ENCODE measurements at regions of chr1 and their contacts with region 1.

Region 1: DNA sequence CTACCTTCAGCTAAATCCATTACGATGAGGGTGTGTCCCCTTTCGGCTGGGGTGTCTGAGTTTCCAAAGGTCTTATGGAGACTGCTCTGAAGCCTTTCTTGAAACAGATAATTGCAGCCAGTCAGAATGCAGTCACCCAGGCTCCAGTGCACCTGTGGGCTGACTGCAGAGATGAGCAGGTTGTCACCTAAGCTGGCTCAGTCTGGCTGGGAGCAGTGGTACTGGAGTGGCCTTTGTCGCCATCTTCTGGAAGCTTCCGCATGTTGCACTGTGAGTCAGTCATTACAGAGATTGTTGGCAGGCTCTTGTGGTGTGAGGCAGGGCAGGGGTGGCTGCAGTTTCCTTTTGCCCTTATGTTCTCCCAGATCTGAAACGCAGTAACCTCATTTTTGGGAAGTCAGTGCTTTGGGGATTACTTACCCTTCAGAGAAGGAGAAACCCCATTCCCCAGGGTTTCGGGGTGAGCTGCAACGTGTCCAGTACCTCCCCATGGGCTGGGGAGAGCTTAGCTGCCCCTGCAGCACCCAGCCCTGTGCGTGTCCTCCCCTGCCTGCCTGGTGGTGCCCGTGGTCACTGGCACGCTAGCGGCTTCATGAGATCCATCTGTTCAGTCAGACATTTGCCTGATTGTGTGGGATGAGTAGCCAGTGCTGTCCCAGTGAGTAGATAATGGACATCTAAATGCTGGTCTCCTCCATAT is 48.0 kb downstream of the SMYD2 start:
- DNase-seq: peak; percentile 78
- ATAC-seq: peak; percentile 87
- H3K4me3 ChIP-seq: no peak overlapping the region
- H3K4me3 Mint-ChIP-seq: no peak overlapping the region
- H3K27ac ChIP-seq: no peak overlapping the region
- H3K27ac Mint-ChIP-seq: peak overlapping the region; percentile 10
- H3K4me1 ChIP-seq: no peaks in the 10 kb centered on the region
- H3K4me1 Mint-ChIP-seq: peaks cover 16% of the 10 kb centered on the region
- H3K27me3 ChIP-seq: no peaks in the 10 kb centered on the region
- H3K27me3 Mint-ChIP-seq: no peaks in the 10 kb centered on the region
- CTCF ChIP-seq: peak; percentile 88

Region 2: DNA sequence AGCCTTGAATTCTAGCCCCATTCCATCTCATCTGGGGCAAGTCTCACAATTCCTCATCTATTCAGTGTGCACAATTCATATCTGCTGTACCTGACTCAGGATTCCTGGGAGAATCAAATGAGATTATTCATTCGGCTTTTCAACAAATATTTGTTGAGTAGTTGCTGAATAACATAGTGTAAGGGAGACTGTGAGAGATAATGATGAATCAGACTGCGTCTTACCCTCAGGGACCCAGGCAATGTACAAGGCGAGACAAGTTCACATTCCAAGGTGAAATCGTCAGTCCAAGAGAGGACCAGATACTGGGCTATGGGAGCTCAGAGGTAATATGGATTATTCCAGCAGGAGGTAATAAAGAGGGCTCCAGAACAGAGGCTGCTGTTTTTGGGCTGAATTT is 115.8 kb before region 1 on chr1:
- CTCF ChIA-PET with region 1: interaction called, 49 read pairs
- POLR2A ChIA-PET with region 1: no interaction called
- intact Hi-C with region 1: loop called (anchors 1 kb)
- DNase-seq: no peak
- ATAC-seq: no peak
- H3K4me3 ChIP-seq: no peak overlapping the region
- H3K4me3 Mint-ChIP-seq: no peak overlapping the region
- H3K27ac ChIP-seq: no peak overlapping the region
- H3K27ac Mint-ChIP-seq: no peak overlapping the region
- H3K4me1 ChIP-seq: peaks cover 3% of the 10 kb centered on the region in 2 donors
- H3K4me1 Mint-ChIP-seq: peaks cover 2% of the 10 kb centered on the region
- H3K27me3 ChIP-seq: no peaks in the 10 kb centered on the region
- H3K27me3 Mint-ChIP-seq: peaks cover 18% of the 10 kb centered on the region
- CTCF ChIP-seq: no peak

Region 3: GRCh38 chr1:214281021-214281719 is 47.8 kb before region 1 on chr1 and contains the start of gene SMYD2:
- CTCF ChIA-PET with region 1: interaction called, 12 read pairs
- POLR2A ChIA-PET with region 1: no interaction called
- intact Hi-C with region 1: loop called (anchors 5 kb)
- DNase-seq: peak; percentile 79
- ATAC-seq: peak; percentile 77
- H3K4me3 ChIP-seq: peak within 1 kb of the TSS; percentile 56 to 86 (median 69)
- H3K4me3 Mint-ChIP-seq: peak within 1 kb of the TSS; percentile 89
- H3K27ac ChIP-seq: peak within 1 kb of the TSS; percentile 58 to 74
- H3K27ac Mint-ChIP-seq: peak within 1 kb of the TSS; percentile 78
- H3K4me1 ChIP-seq: peaks cover 17 to 28% of the 10 kb centered on the region in 2 donors
- H3K4me1 Mint-ChIP-seq: peaks cover 29% of the 10 kb centered on the region
- H3K27me3 ChIP-seq: no peaks in the 10 kb centered on the region
- H3K27me3 Mint-ChIP-seq: no peaks in the 10 kb centered on the region
- CTCF ChIP-seq: no peak
- total RNA-seq, gene SMYD2: 29.1 and 29.5 TPM in 2 replicates

Region 4: DNA sequence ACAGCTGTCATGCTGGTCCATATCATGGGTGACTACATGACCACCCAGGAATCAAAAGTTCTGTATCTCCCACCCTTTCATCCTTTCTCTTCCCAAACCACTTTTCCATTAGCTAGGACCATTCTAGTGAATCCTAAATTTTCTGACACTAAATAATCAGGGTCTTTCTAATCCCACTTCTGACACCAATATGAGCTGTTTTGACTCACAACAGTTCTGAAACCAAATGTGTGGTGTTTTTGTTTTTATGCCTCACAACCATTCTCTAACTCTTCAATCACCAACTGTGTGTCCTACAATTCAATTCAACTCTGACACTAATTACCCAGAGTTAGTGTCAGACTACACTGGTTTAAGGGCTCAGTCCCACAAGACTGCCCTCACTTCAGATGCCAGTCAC is 16.0 kb after region 1 on chr1:
- CTCF ChIA-PET with region 1: interaction called, 35 read pairs
- POLR2A ChIA-PET with region 1: interaction called, 3 read pairs
- intact Hi-C with region 1: no loop called
- DNase-seq: no peak
- ATAC-seq: no peak
- H3K4me3 ChIP-seq: no peak overlapping the region
- H3K4me3 Mint-ChIP-seq: no peak overlapping the region
- H3K27ac ChIP-seq: no peak overlapping the region
- H3K27ac Mint-ChIP-seq: no peak overlapping the region
- H3K4me1 ChIP-seq: no peaks in the 10 kb centered on the region
- H3K4me1 Mint-ChIP-seq: no peaks in the 10 kb centered on the region
- H3K27me3 ChIP-seq: no peaks in the 10 kb centered on the region
- H3K27me3 Mint-ChIP-seq: no peaks in the 10 kb centered on the region
- CTCF ChIP-seq: no peak

Region 5: DNA sequence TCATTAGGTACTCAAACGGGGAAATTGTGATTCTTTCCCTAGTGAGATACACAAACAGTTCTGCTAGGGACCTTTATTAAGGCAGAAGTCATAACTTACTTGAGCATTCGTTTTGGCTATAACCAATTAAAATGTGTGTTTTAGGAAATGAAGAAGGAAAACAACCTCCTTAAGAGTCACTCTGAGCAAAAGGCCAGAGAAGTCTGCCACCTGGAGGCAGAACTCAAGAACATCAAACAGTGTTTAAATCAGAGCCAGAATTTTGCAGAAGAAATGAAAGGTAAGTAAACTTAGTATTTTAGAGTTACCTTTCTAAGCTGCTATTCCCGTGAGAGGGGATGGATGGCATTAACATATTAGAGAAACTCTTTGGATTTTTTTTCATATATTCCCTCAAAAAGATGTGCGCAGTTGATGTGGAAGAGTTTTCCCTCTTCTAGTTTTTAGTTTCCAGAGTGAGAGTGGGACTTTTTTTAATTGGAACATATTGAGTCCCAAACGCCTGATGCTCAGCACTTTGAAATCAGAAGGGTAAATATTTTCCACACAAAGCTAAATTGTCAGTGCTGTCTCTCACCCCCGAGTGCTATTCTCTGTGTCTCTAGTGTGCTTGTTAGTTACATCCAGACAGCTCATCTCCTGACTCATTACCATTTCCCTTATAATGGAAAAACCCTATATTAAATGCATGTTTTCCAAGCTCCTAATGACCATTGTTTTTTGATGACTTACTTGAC is 309.0 kb after region 1 on chr1:
- CTCF ChIA-PET with region 1: interaction called, 23 read pairs
- POLR2A ChIA-PET with region 1: no interaction called
- intact Hi-C with region 1: no loop called
- DNase-seq: peak; percentile 36
- ATAC-seq: no peak
- H3K4me3 ChIP-seq: no peak overlapping the region
- H3K4me3 Mint-ChIP-seq: no peak overlapping the region
- H3K27ac ChIP-seq: no peak overlapping the region
- H3K27ac Mint-ChIP-seq: no peak overlapping the region
- H3K4me1 ChIP-seq: no peaks in the 10 kb centered on the region
- H3K4me1 Mint-ChIP-seq: no peaks in the 10 kb centered on the region
- H3K27me3 ChIP-seq: no peaks in the 10 kb centered on the region
- H3K27me3 Mint-ChIP-seq: no peaks in the 10 kb centered on the region
- CTCF ChIP-seq: peak; percentile 73